ENCODE measurements at regions of chr14 and their contacts with region 1.

Region 1: DNA sequence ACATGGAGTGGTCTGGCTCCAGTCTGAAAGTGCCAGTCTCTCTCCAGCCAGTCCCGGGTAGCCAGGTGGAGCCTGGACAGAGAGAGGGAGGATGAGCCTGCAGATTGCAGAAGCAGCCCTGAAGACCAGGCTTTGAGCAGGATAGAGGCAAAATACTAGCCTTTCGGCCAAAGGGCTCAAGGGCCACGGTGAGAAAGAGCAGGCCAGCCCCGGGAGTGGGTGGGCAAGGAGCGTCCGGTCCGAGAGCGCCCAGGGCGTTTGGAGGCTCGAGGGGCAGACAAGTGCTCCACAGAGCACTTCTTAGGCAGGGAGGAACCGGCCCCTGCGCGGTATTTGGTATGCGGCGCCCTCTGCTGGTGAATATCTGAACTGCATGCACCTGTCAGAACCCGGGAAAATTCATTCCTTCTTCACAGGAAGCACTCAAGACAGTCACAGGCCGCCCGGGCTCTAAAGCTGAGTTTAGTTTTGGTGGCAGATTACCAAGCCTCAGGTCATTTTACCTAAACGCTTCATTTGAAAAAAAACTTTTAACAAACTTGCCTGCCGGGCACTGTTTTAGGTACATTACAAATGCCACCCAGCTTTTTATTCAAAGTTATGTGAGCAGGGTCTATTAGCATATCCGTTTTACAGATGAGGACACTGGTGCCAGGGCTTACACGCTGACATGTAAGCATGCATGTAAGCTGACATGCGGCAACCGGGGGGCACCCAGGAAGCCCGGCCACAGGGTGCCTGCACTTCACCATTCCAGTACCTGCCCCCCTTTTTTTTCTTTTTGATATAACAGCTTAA is 21.0 kb upstream of the PSMC1 start:
- DNase-seq: peak; percentile 82
- H3K4me3 ChIP-seq: no peak overlapping the region
- H3K27ac ChIP-seq: no peak overlapping the region
- H3K4me1 ChIP-seq: no peaks in the 10 kb centered on the region
- H3K27me3 ChIP-seq: no peaks in the 10 kb centered on the region
- CTCF ChIP-seq: peak; percentile 94

Region 2: GRCh38 chr14:89040460-89041259 is 1194.7 kb before region 1 on chr14:
- CTCF ChIA-PET with region 1: no interaction called
- POLR2A ChIA-PET with region 1: no interaction called
- intact Hi-C with region 1: loop called (anchors 10 kb)
- DNase-seq: peak; percentile 81
- H3K4me3 ChIP-seq: peak overlapping the region; percentile 30
- H3K27ac ChIP-seq: no peak overlapping the region
- H3K4me1 ChIP-seq: no peaks in the 10 kb centered on the region
- H3K27me3 ChIP-seq: peaks cover 12% of the 10 kb centered on the region
- CTCF ChIP-seq: peak; percentile 98

Region 3: GRCh38 chr14:89936658-89937185 is 298.7 kb before region 1 on chr14:
- CTCF ChIA-PET with region 1: interaction called, 12 read pairs
- POLR2A ChIA-PET with region 1: no interaction called
- intact Hi-C with region 1: no loop called
- DNase-seq: no peak
- H3K4me3 ChIP-seq: no peak overlapping the region
- H3K27ac ChIP-seq: no peak overlapping the region
- H3K4me1 ChIP-seq: no peaks in the 10 kb centered on the region
- H3K27me3 ChIP-seq: no peaks in the 10 kb centered on the region
- CTCF ChIP-seq: peak; percentile 16; the same call in 1 of the 2 replicates

Region 4: GRCh38 chr14:89973234-89973823 is 262.0 kb before region 1 on chr14:
- CTCF ChIA-PET with region 1: interaction called, 32 read pairs
- POLR2A ChIA-PET with region 1: no interaction called
- intact Hi-C with region 1: loop called (anchors 1 kb)
- DNase-seq: peak; percentile 76
- H3K4me3 ChIP-seq: no peak overlapping the region
- H3K27ac ChIP-seq: no peak overlapping the region
- H3K4me1 ChIP-seq: no peaks in the 10 kb centered on the region
- H3K27me3 ChIP-seq: no peaks in the 10 kb centered on the region
- CTCF ChIP-seq: peak; percentile 88

Region 5: DNA sequence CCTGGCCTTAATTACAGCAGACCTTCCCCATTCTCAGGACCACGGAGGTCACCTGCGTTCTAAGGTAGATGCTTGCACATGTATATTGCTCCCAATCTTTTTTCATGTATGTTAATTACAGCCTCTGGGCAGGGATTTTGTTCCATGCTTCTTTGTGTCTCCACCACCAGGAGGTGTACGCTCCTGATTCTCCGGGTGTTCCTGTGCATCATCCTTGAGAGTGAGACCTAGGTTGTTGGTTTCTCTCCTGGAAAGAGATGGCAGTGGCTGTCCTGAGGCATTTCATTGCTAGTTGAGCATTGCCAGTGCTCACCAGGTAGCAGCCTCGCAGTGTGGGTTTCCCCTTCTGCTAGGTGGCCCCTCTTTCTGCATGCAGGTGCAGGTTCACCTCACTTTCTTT is 120.8 kb before region 1 on chr14:
- CTCF ChIA-PET with region 1: no interaction called
- POLR2A ChIA-PET with region 1: no interaction called
- intact Hi-C with region 1: loop called (anchors 2 kb)
- DNase-seq: peak; percentile 32
- H3K4me3 ChIP-seq: no peak overlapping the region
- H3K27ac ChIP-seq: no peak overlapping the region
- H3K4me1 ChIP-seq: no peaks in the 10 kb centered on the region
- H3K27me3 ChIP-seq: peaks cover 7% of the 10 kb centered on the region
- CTCF ChIP-seq: peak; percentile 42

Measured in A673 (cell line).